PC-3 (cell line): ENCODE measurements at regions of chr4 and their contacts with region 1.

Region 1: DNA sequence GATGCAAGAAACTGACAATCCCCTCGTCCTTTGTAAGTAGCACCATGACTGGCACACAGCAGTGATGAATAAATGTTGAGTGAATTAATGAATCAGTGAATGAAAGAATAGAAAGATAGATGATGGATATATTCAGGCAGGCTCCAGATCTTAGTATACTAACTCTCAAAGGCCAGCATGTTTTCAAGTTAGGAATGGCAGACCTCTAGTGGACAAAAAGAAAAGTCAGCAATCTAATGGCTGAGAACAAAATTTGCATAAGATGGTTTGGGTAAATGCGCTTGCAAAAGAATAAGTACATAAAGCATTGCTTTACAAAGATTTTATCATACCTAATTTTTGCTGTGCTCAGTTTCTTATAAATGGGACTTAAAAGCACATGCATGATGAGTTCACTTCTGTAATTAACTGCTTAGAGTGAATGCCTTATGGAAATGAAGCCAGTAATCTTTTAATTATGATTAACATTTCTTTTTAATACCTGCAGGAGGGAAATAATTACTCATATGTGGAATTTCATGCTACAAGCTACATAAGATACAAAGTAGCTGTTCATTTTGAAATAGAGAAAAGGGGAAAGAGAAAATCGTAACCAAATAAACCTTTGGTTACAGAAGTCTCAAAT is 126.9 kb upstream of the GPRIN3 start:
- DNase-seq: peak; percentile 31
- ATAC-seq: peak; percentile 46; the same call in 1 of the 2 replicates
- H3K4me3 ChIP-seq: no peak overlapping the region
- H3K27ac ChIP-seq: no peak overlapping the region
- H3K4me1 ChIP-seq: no peaks in the 10 kb centered on the region
- H3K27me3 ChIP-seq: peaks cover 17% of the 10 kb centered on the region
- CTCF ChIP-seq: peak; percentile 71

Region 2: GRCh38 chr4:89158884-89159503 is 275.5 kb before region 1 on chr4:
- CTCF ChIA-PET with region 1: no interaction called
- POLR2A ChIA-PET with region 1: no interaction called
- intact Hi-C with region 1: loop called (anchors 1 kb)
- DNase-seq: peak; percentile 65
- ATAC-seq: no peak
- H3K4me3 ChIP-seq: no peak overlapping the region
- H3K27ac ChIP-seq: no peak overlapping the region
- H3K4me1 ChIP-seq: no peaks in the 10 kb centered on the region
- H3K27me3 ChIP-seq: no peaks in the 10 kb centered on the region
- CTCF ChIP-seq: peak; percentile 65

Region 3: GRCh38 chr4:89226665-89227574 is 207.6 kb before region 1 on chr4:
- CTCF ChIA-PET with region 1: no interaction called
- POLR2A ChIA-PET with region 1: no interaction called
- intact Hi-C with region 1: loop called (anchors 1 kb)
- DNase-seq: peak; percentile 79
- ATAC-seq: peak; percentile 95
- H3K4me3 ChIP-seq: no peak overlapping the region
- H3K27ac ChIP-seq: no peak overlapping the region
- H3K4me1 ChIP-seq: 0 out of 2 replicates have a peak, but pooled peaks cover 3% of the 10 kb centered on the region
- H3K27me3 ChIP-seq: no peaks in the 10 kb centered on the region
- CTCF ChIP-seq: peak; percentile 74